Activated T-helper 1 cell treated with anti-CD3 and anti-CD28 coated beads, Interleukin-12 subunit alpha, Interleukin-12 subunit beta, Interleukin-2, Interleukin-4 antibody, amounts not matched to agents 30 ng/mL and 10 ng/mL and 1 ng/mL, durations not matched to agents 14 hours and 24 hours and 36 hours (primary cell): ENCODE measurements at regions of chr19 and their contacts with region 1.

Region 1: GRCh38 chr19:39445265-39446111 is at the start of gene SUPT5H:
- DNase-seq: peak; percentile 97
- H3K4me3 Mint-ChIP-seq: peak within 1 kb of the TSS; percentile 91
- H3K27ac Mint-ChIP-seq: peak within 1 kb of the TSS; percentile 94
- H3K4me1 Mint-ChIP-seq: peaks cover 41% of the 10 kb centered on the region
- H3K27me3 Mint-ChIP-seq: no peaks in the 10 kb centered on the region
- total RNA-seq, gene SUPT5H: 200 and 203 TPM in 2 replicates

Region 2: DNA sequence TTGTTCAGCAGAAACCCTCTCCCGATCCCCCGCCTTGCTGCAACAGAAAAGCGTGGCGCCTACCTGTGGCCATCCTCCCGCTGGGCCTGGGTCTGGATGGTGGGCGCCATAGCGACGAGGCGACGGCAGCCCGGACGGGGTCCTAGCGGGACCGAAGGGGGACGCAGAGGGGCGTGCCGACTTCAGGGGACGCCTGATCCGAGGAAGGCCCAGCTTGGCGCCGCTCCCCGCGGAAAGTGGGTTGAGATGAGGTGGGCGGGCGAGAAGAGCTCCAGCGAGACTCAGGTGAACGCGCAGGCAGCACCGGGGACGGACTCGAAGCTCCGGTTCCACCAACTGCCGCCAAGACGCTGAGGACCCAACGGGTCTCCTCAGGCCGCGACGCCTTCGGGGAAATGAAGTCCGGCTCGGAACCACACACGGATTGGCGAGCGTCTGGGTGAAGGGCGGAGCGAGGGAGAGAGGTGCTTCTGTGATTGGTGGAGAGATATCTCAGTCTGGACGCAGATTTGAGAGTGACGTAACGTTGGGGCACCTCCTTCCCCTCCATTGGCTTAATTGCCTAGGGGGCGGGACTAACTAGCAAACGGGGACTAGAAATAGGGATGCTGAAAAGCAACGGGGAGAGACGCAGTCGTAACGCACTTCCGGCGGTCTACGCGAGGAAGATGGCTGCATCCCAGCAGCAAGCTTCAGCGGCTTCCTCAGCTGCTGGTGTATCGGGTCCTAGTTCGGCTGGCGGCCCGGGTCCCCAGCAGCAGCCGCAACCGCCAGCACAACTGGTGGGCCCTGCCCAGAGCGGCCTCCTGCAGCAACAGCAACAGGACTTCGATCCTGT is 54.5 kb before region 1 on chr19 and contains the starts of genes MED29 and PAF1:
- intact Hi-C with region 1: loop called (anchors 2 kb)
- DNase-seq: peak; percentile 95
- H3K4me3 Mint-ChIP-seq: peak within 1 kb of the TSS; percentile 98
- H3K27ac Mint-ChIP-seq: peak within 1 kb of the TSS; percentile 93
- H3K4me1 Mint-ChIP-seq: peaks cover 31% of the 10 kb centered on the region
- H3K27me3 Mint-ChIP-seq: no peaks in the 10 kb centered on the region
- total RNA-seq, gene MED29: 37.5 and 45.8 TPM in 2 replicates
- total RNA-seq, gene PAF1: 54.8 and 57.3 TPM in 2 replicates

Region 3: GRCh38 chr19:39502640-39503417 is 57.3 kb after region 1 on chr19:
- intact Hi-C with region 1: loop called (anchors 1 kb)
- DNase-seq: peak; percentile 76
- H3K4me3 Mint-ChIP-seq: no peak overlapping the region
- H3K27ac Mint-ChIP-seq: no peak overlapping the region
- H3K4me1 Mint-ChIP-seq: peaks cover 27% of the 10 kb centered on the region
- H3K27me3 Mint-ChIP-seq: peaks cover 70% of the 10 kb centered on the region

Region 4: DNA sequence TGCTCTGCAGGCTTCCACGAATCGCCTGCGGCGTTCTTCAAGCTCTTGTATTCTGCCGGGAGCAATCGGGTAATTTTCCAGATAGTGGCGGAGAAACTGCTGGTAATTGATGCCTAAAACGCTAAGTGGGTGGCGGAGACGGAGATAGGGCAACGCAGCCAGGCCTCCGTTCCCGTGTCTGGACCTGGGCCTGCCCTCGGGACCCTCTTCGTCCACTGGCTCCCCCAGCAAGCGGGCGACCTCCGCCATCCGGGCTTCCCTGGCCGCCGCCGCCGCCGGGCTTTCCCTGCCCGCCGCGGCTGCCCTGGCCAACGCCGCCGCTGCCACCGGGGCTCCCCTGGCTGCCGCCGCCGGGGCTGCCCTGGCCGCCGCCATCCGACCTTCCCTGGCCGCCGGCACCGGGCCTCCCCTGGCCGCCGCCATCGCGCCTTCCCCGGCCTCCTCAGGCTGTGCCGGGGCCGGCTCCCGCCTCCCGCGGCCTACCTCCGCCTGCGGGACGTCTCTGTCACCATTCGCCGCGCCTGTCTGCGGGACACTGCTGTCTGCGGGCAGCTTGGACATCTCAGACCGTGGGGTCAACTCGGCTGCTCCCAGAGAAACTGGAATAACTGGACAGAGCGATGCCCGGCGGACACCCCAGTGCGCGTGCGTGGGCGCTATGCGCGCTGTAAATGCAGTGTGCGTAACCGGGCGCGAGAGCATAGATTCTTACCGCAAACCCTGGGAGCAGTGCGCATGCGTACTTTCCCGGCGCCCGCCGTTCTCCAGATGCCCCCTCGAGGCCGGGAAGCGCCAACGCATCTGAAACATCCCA is 94.2 kb after region 1 on chr19 and contains the start of gene EID2:
- intact Hi-C with region 1: loop called (anchors 1 kb)
- DNase-seq: peak; percentile 92
- H3K4me3 Mint-ChIP-seq: peak within 1 kb of the TSS; percentile 95
- H3K27ac Mint-ChIP-seq: peak within 1 kb of the TSS; percentile 91
- H3K4me1 Mint-ChIP-seq: peaks cover 36% of the 10 kb centered on the region
- H3K27me3 Mint-ChIP-seq: peaks cover 2% of the 10 kb centered on the region
- total RNA-seq, gene EID2: 17.0 and 17.6 TPM in 2 replicates

Region 5: DNA sequence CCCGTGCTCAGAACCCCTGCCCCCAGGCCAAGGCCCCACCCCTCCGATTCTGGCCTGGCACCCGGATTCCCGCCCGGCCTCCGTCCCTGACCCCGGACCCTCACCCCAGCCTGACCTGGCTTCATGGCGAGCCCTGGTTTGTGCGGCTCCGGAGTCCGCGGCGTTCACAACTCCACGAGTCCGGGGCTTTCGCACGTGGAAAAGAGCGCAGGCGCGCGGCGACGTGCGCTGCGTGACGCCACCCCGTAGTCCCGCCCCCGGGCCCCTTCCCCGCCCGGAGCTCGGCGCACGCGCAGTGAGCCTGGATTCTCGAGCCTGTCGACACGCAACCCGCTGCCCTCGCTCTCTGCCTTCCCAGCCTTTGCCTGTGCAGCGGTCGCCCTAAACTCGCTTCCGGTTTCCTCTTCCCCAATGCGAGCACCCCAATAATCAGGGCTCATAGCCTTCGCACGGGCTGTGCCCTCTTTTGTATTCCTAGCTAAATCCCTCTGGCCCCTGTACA is 400.7 kb after region 1 on chr19 and contains the start of gene FBL:
- intact Hi-C with region 1: loop called (anchors 5 kb)
- DNase-seq: peak; percentile 97
- H3K4me3 Mint-ChIP-seq: peak within 1 kb of the TSS; percentile 94
- H3K27ac Mint-ChIP-seq: peak within 1 kb of the TSS; percentile 95
- H3K4me1 Mint-ChIP-seq: peaks cover 46% of the 10 kb centered on the region
- H3K27me3 Mint-ChIP-seq: peaks cover 3% of the 10 kb centered on the region
- total RNA-seq, gene FBL: 526 and 528 TPM in 2 replicates